PC-3 (cell line): ENCODE measurements at regions of chr14 and their contacts with region 1.

Region 1: GRCh38 chr14:51901475-51902024 is 41.1 kb downstream of the GNG2 start:
- DNase-seq: no peak
- ATAC-seq: no peak
- H3K4me3 ChIP-seq: no peak overlapping the region
- H3K27ac ChIP-seq: no peak overlapping the region
- H3K4me1 ChIP-seq: peaks cover 5% of the 10 kb centered on the region
- H3K27me3 ChIP-seq: no peaks in the 10 kb centered on the region
- CTCF ChIP-seq: no peak

Region 2: DNA sequence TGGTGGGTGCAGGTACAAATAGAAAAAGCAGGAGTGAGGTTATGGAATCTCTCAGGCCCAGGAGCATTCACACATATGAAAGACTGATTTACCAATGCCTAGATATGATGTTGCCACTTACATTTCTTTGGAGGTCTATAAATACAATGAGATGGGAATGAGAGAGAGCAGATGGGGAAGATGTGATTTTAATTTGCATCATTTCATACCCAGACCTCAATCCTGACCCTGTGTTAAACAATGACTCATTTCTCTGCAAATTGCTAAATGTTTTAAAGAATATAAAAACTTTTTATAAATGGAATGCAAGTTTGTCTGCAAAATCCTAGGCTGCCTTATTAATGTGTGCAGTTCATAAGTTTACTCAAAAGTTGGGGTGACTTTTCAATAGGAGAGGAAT is 79.7 kb before region 1 on chr14:
- CTCF ChIA-PET with region 1: interaction called, 3 read pairs
- POLR2A ChIA-PET with region 1: no interaction called
- intact Hi-C with region 1: loop called (anchors 1 kb)
- DNase-seq: peak; percentile 9
- ATAC-seq: peak; percentile 55
- H3K4me3 ChIP-seq: no peak overlapping the region
- H3K27ac ChIP-seq: no peak overlapping the region
- H3K4me1 ChIP-seq: peaks cover 25% of the 10 kb centered on the region
- H3K27me3 ChIP-seq: no peaks in the 10 kb centered on the region
- CTCF ChIP-seq: no peak

Region 3: DNA sequence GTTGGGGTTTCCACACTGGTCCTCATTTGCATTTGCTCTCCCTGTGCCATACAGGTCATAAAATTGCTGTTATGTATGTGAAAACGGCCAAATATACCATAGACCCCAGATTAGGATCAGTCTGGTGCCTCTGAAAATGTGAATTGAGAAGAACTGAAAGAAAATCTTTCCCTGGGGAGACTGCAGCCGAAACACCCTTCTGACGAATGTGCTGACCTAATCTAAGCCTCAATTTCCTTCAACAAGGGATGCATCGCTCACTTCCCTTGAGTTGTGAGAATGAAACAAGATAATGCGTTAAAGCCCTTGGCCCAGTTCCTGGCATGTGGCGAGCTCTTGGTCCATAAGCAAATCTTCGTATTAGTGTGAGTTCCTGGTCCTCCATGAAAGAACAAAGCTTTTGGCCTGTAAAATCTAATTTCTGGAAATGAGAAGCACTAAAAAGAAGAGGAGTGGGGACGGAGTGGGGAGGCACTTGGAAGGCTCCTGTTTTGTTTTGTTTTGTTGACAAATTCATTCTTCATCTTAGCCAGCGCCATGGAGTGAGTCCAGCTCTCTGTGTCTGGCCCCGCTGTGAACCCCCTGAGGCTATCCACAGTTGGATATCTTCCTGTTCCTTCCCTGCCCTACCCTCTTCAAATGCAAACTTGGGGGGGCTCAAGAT is 38.3 kb after region 1 on chr14:
- CTCF ChIA-PET with region 1: no interaction called
- POLR2A ChIA-PET with region 1: no interaction called
- intact Hi-C with region 1: no loop called
- DNase-seq: no peak
- ATAC-seq: no peak
- H3K4me3 ChIP-seq: no peak overlapping the region
- H3K27ac ChIP-seq: no peak overlapping the region
- H3K4me1 ChIP-seq: no peaks in the 10 kb centered on the region
- H3K27me3 ChIP-seq: no peaks in the 10 kb centered on the region
- CTCF ChIP-seq: no peak